T-cell (primary cell): ENCODE measurements at regions of chr9 and their contacts with region 1.

Region 1: GRCh38 chr9:35814841-35815543 is at the start of gene HINT2:
- DNase-seq: peak; percentile 93 to 99 (median 97)
- ATAC-seq: peak; percentile 77 to 87 (median 86)
- H3K4me3 ChIP-seq: peak within 1 kb of the TSS; percentile 85 to 90
- H3K4me3 Mint-ChIP-seq: peak within 1 kb of the TSS; percentile 84 to 97 (median 96)
- H3K27ac ChIP-seq: peak within 1 kb of the TSS; percentile 82
- H3K27ac Mint-ChIP-seq: peak within 1 kb of the TSS; percentile 96 to 98
- H3K4me1 ChIP-seq: peaks cover 9 to 39% of the 10 kb centered on the region in 2 experiments
- H3K4me1 Mint-ChIP-seq: peaks cover 35 to 43% (median 37%) of the 10 kb centered on the region in 3 donors
- H3K27me3 ChIP-seq: no peaks in the 10 kb centered on the region
- H3K27me3 Mint-ChIP-seq: no peaks in the 10 kb centered on the region
- total RNA-seq, gene HINT2: 15.4 to 30.3 (median 28.5) TPM

Region 2: GRCh38 chr9:34701769-34702736 is 1112.9 kb before region 1 on chr9:
- CTCF ChIA-PET with region 1: no interaction called
- POLR2A ChIA-PET with region 1: interaction called in 1 of 2 experiments, 13 read pairs
- DNase-seq: peak; percentile 43 to 86 (median 68)
- ATAC-seq: peak; percentile 76 to 81 (median 80)
- H3K4me3 ChIP-seq: peak overlapping the region; percentile 49 to 73
- H3K4me3 Mint-ChIP-seq: peak overlapping the region; percentile 75 to 81 (median 78)
- H3K27ac ChIP-seq: no peak overlapping the region
- H3K27ac Mint-ChIP-seq: peak overlapping the region in 1 of 2 donors; percentile 3
- H3K4me1 ChIP-seq: peaks cover 0 to 14% of the 10 kb centered on the region in 2 experiments
- H3K4me1 Mint-ChIP-seq: peaks cover 4 to 16% (median 6%) of the 10 kb centered on the region in 3 donors
- H3K27me3 ChIP-seq: peaks cover 0 to 4% of the 10 kb centered on the region in 2 experiments
- H3K27me3 Mint-ChIP-seq: peaks cover 1 to 10% of the 10 kb centered on the region in 2 donors

Region 3: GRCh38 chr9:36036780-36037548 is 222.0 kb after region 1 on chr9 and contains the start of gene RECK:
- CTCF ChIA-PET with region 1: no interaction called
- POLR2A ChIA-PET with region 1: no interaction called
- DNase-seq: peak; percentile 60 to 90 (median 78)
- ATAC-seq: peak; percentile 92 to 94 (median 94)
- H3K4me3 ChIP-seq: peak within 1 kb of the TSS; percentile 84 to 85
- H3K4me3 Mint-ChIP-seq: peak within 1 kb of the TSS; percentile 83 to 93 (median 87)
- H3K27ac ChIP-seq: peak within 1 kb of the TSS; percentile 38
- H3K27ac Mint-ChIP-seq: peak within 1 kb of the TSS; percentile 46 to 71
- H3K4me1 ChIP-seq: peaks cover 22 to 28% of the 10 kb centered on the region in 2 experiments
- H3K4me1 Mint-ChIP-seq: peaks cover 46 to 48% (median 47%) of the 10 kb centered on the region in 3 donors
- H3K27me3 ChIP-seq: peaks cover 0 to 4% of the 10 kb centered on the region in 2 experiments
- H3K27me3 Mint-ChIP-seq: no peaks in the 10 kb centered on the region
- total RNA-seq, gene RECK: 8.9 to 11.4 (median 9.9) TPM

Region 4: GRCh38 chr9:36169728-36170127 is 354.7 kb after region 1 on chr9:
- CTCF ChIA-PET with region 1: no interaction called
- POLR2A ChIA-PET with region 1: no interaction called
- DNase-seq: no peak
- ATAC-seq: no peak
- H3K4me3 ChIP-seq: no peak overlapping the region
- H3K4me3 Mint-ChIP-seq: no peak overlapping the region
- H3K27ac ChIP-seq: no peak overlapping the region
- H3K27ac Mint-ChIP-seq: no peak overlapping the region
- H3K4me1 ChIP-seq: peaks cover 0 to 14% of the 10 kb centered on the region in 2 experiments
- H3K4me1 Mint-ChIP-seq: peaks cover 5 to 13% (median 8%) of the 10 kb centered on the region in 3 donors
- H3K27me3 ChIP-seq: peaks cover 0 to 19% of the 10 kb centered on the region in 2 experiments
- H3K27me3 Mint-ChIP-seq: peaks cover 0 to 2% of the 10 kb centered on the region in 2 donors

Region 5: DNA sequence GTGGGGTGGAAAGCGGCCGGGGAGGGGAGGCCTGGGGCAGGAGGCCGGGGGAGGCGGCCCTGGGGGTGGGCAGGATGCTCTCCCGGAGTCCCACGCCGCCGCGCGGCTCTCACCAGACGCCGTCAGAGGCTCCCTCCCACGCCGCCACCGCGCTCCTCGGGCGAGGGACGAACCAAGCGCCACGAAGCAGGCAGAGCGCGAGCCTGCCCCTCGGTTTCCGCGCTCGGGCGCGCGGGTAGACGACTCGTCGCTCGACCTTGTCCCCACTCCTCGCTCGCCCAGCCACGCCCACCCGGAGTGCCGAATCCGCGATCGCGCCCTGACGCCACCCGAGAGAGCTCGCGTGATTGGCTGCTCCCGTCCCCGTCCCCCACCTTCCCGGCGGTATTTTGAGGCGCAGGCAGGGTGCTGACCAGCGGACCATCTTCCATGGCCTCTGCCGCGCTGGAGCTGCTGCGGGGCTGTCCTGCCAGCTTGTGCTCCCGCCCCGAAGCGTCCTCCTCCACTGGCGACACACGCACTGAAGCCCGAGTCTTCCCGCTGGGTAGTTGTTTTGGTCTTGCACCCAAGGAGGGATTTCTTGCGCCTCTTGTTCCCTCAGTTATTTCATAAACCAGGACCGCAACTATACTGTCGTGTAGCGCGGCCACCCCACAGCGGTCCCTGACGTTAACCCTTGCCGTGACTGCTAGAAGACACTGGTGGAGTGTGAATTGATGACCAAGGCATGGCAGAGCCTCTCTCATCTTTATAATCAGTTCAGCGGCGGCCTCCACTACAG is 443.4 kb after region 1 on chr9 and contains the start of gene GNE:
- CTCF ChIA-PET with region 1: no interaction called
- POLR2A ChIA-PET with region 1: interaction called in 1 of 2 experiments, 16 read pairs
- DNase-seq: peak; percentile 93 to 99 (median 97)
- ATAC-seq: peak; percentile 87 to 93 (median 92)
- H3K4me3 ChIP-seq: peak within 1 kb of the TSS; percentile 74 to 79
- H3K4me3 Mint-ChIP-seq: peak within 1 kb of the TSS; percentile 91 to 97 (median 96)
- H3K27ac ChIP-seq: peak within 1 kb of the TSS; percentile 75
- H3K27ac Mint-ChIP-seq: peak within 1 kb of the TSS; percentile 94 to 95
- H3K4me1 ChIP-seq: peaks cover 2 to 18% of the 10 kb centered on the region in 2 experiments
- H3K4me1 Mint-ChIP-seq: peaks cover 8 to 20% (median 16%) of the 10 kb centered on the region in 3 donors
- H3K27me3 ChIP-seq: no peaks in the 10 kb centered on the region
- H3K27me3 Mint-ChIP-seq: no peaks in the 10 kb centered on the region
- total RNA-seq, gene GNE: 12.3 to 17.0 (median 14.9) TPM